HepG2 (cell line): ENCODE measurements at regions of chr1 and their contacts with region 1.

Region 1: GRCh38 chr1:39901698-39902459 is at the start of gene MYCL:
- DNase-seq: peak; percentile 64
- ATAC-seq: peak; percentile 69
- H3K4me3 ChIP-seq: peak within 1 kb of the TSS; percentile 60 to 85 (median 64)
- H3K27ac ChIP-seq: no peak within 1 kb of the TSS
- H3K4me1 ChIP-seq: peaks cover 50% of the 10 kb centered on the region
- H3K27me3 ChIP-seq: peaks cover 0 to 34% of the 10 kb centered on the region in 2 experiments; a peak in 3 of 5 replicates
- CTCF ChIP-seq: peak; percentile 94
- EP300 ChIP-seq: no peak
- POLR2A ChIP-seq: no peak
- RAD21 ChIP-seq: peak; percentile 72
- total RNA-seq, gene MYCL: 0.31 and 0.42 TPM in 2 replicates

Region 2: DNA sequence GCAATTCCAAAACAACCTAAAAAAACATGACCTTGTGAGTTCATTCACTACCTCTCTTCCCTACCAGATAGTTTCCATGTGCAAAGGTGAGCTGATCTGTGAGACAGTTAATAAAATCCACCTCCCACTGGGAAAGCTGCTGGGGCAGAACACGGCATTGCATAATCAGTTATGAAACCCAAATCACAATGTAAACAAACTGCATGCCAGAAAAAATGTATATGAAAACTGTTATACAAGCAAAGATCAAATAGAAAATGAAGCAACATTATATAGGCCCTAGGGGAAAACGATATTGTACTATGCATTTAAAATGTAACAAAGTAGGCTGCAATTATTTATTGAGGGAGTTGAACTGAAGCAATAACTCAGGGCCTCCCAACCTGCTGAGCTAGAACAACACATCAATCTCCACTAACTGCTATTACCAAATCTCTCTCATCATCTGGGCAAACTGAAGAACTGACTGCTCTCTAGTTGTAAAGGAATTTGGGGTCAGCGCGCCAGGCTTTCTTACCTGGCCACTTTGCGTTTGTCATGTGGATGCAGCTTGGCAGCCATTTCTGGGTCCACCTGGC is 49.6 kb before region 1 on chr1:
- CTCF ChIA-PET with region 1: no interaction called
- POLR2A ChIA-PET with region 1: interaction called, 5 read pairs
- in situ Hi-C with region 1: no loop called
- intact Hi-C with region 1: loop called (anchors 5 kb)
- DNase-seq: peak; percentile 69
- ATAC-seq: peak; percentile 77
- H3K4me3 ChIP-seq: no peak overlapping the region
- H3K27ac ChIP-seq: peak overlapping the region; percentile 64
- H3K4me1 ChIP-seq: peaks cover 23% of the 10 kb centered on the region
- H3K27me3 ChIP-seq: no peaks in the 10 kb centered on the region
- CTCF ChIP-seq: no peak
- EP300 ChIP-seq: peak in 1 of 2 experiments; percentile 68; a peak in 1 of 4 replicates
- POLR2A ChIP-seq: no peak
- RAD21 ChIP-seq: no peak